ENCODE measurements at regions of chr5 and their contacts with region 1.

Region 1: GRCh38 chr5:172697123-172698121 is 56.4 kb downstream of the NEURL1B start:
- DNase-seq: peak; percentile 64
- ATAC-seq: peak; percentile 94
- H3K4me3 Mint-ChIP-seq: peak overlapping the region; percentile 89
- H3K27ac Mint-ChIP-seq: peak overlapping the region; percentile 84
- H3K4me1 Mint-ChIP-seq: peaks cover 19% of the 10 kb centered on the region
- H3K27me3 Mint-ChIP-seq: peaks cover 16% of the 10 kb centered on the region
- CTCF ChIP-seq: no peak

Region 2: DNA sequence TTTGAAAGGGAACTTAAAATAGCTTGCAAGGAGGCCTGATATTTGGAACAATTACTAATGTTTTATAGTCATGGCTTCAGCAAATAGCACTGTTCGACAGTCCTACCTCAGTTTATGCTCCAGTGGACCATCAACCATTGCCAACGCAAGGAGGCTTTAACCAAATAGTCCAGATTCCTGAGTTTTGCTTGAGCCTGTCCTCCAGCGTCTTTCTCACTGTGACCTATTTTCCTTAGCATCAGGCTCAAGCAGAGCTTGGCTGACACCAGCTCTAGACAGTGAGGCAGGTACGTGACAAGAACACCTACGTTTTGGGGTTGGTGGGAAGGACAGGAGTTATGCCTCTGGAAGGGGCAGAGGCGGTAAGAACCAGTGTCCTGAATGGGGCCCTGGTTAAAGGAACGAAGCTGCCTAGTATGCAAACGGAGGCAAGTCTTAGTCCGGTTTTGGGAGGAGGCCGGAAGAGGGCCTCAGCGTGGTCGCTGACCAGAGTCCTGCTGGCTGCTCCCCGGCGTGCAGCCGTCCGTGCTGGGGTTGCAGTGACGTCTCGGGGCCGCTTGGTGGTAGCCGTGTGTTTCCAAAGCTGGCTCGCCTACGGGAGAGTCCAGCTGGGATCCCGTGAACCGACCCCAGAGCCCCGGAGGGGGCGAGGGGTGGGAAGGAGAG is 1279.0 kb before region 1 on chr5:
- CTCF ChIA-PET with region 1: no interaction called
- POLR2A ChIA-PET with region 1: no interaction called
- intact Hi-C with region 1: loop called (anchors 2 kb)
- DNase-seq: peak; percentile 42
- ATAC-seq: peak; percentile 67
- H3K4me3 Mint-ChIP-seq: peak overlapping the region; percentile 71
- H3K27ac Mint-ChIP-seq: no peak overlapping the region
- H3K4me1 Mint-ChIP-seq: peaks cover 20% of the 10 kb centered on the region
- H3K27me3 Mint-ChIP-seq: peaks cover 20% of the 10 kb centered on the region
- CTCF ChIP-seq: peak; percentile 49

Region 3: DNA sequence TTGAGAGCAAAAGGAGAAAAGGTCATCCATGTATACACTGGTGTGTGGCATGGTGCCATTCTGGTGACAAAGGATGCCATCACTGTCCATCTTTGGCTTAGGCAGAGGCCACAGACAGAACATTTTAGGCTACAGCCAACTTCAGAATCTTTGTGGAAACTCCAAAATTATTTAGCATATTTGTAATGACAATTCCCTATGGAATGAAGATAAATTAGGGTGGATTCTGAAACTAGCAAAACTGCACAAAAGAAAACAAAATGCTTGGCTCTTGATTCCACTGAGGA is 783.5 kb before region 1 on chr5:
- CTCF ChIA-PET with region 1: interaction called, 3 read pairs
- POLR2A ChIA-PET with region 1: no interaction called
- intact Hi-C with region 1: loop called (anchors 5 kb)
- DNase-seq: no peak
- ATAC-seq: no peak
- H3K4me3 Mint-ChIP-seq: no peak overlapping the region
- H3K27ac Mint-ChIP-seq: peak overlapping the region; percentile 36
- H3K4me1 Mint-ChIP-seq: peaks cover 71% of the 10 kb centered on the region
- H3K27me3 Mint-ChIP-seq: no peaks in the 10 kb centered on the region
- CTCF ChIP-seq: no peak

Region 4: GRCh38 chr5:172293054-172293744 is 404.2 kb before region 1 on chr5:
- CTCF ChIA-PET with region 1: no interaction called
- POLR2A ChIA-PET with region 1: no interaction called
- intact Hi-C with region 1: loop called (anchors 2 kb)
- DNase-seq: peak; percentile 21
- ATAC-seq: peak; percentile 100
- H3K4me3 Mint-ChIP-seq: no peak overlapping the region
- H3K27ac Mint-ChIP-seq: no peak overlapping the region
- H3K4me1 Mint-ChIP-seq: peaks cover 2% of the 10 kb centered on the region
- H3K27me3 Mint-ChIP-seq: peaks cover 3% of the 10 kb centered on the region
- CTCF ChIP-seq: peak; percentile 67

Region 5: DNA sequence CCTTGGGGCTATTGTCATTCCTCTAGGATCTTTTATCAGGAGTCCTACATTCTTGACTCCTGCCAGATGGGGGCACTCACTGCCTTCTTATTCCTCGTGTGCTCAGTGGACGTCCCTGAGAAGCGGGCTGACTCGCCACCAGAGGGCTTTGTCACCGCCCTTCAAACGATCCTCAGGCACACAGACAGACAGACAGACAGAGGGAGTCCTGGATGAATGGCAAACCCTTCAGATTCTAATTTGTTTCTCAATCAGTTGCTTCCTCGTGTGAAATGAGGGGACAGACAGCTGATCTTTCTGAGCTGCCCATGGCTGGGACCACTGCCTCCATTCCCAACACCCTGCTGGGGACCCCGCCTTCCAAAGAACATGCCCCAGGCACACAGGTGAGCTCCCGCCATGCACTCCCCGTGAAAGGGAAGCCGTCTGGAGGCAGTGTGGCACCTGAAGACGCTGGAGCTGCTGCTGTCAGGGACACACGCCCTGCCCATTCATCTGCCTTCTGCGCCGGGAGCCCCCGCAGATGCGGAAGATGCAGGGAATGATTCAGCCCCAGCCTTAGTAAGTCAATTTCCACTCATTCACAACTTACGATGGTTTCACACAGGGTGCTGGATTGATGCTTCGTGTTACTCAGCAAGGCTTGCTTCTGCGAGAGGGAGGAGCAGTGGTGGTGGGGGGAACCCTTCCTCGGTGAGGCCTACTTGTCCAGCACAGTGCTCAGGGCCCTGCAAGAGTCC is 218.2 kb before region 1 on chr5:
- CTCF ChIA-PET with region 1: interaction called, 6 read pairs
- POLR2A ChIA-PET with region 1: no interaction called
- intact Hi-C with region 1: loop called (anchors 1 kb)
- DNase-seq: no peak
- ATAC-seq: peak; percentile 80
- H3K4me3 Mint-ChIP-seq: no peak overlapping the region
- H3K27ac Mint-ChIP-seq: no peak overlapping the region
- H3K4me1 Mint-ChIP-seq: no peaks in the 10 kb centered on the region
- H3K27me3 Mint-ChIP-seq: peaks cover 6% of the 10 kb centered on the region
- CTCF ChIP-seq: no peak

Region 6: GRCh38 chr5:172678902-172679301 is 18.5 kb before region 1 on chr5:
- CTCF ChIA-PET with region 1: no interaction called
- POLR2A ChIA-PET with region 1: no interaction called
- intact Hi-C with region 1: no loop called
- DNase-seq: no peak
- ATAC-seq: no peak
- H3K4me3 Mint-ChIP-seq: no peak overlapping the region
- H3K27ac Mint-ChIP-seq: no peak overlapping the region
- H3K4me1 Mint-ChIP-seq: peaks cover 6% of the 10 kb centered on the region
- H3K27me3 Mint-ChIP-seq: peaks cover 2% of the 10 kb centered on the region
- CTCF ChIP-seq: no peak

Region 7: DNA sequence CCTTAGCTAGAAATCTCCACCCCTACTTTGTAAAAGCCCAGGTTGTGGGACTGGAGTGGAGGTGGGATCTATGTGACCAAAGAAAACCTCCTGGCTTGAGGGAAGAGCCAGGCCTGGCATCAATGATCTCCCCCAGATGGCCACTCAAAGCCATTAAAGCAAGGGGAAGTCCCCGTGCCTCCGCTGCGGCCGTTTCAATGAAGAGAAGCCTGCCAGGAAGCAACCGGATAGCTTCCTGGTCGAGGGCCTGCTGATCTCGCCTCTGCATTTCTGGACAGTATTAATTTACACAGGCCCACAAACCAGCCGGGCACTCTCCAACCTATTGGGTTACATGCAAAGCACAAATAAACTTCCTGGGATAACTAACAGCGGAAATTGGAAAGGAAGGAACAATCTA is 1866.5 kb after region 1 on chr5:
- CTCF ChIA-PET with region 1: no interaction called
- POLR2A ChIA-PET with region 1: no interaction called
- intact Hi-C with region 1: no loop called
- DNase-seq: no peak
- ATAC-seq: no peak
- H3K4me3 Mint-ChIP-seq: no peak overlapping the region
- H3K27ac Mint-ChIP-seq: no peak overlapping the region
- H3K4me1 Mint-ChIP-seq: no peaks in the 10 kb centered on the region
- H3K27me3 Mint-ChIP-seq: no peaks in the 10 kb centered on the region
- CTCF ChIP-seq: no peak

Measured in activated B cell treated with CpG ODN at 0.5 μM for 24 hours (primary cell).